HCT116 (cell line): ENCODE measurements at regions of chr1 and their contacts with region 1.

Region 1: GRCh38 chr1:149886396-149887195 is 12.8 kb upstream of the BOLA1 start:
- DNase-seq: peak; percentile 99
- ATAC-seq: peak; percentile 63
- H3K4me3 ChIP-seq: peak overlapping the region; percentile 50 to 63
- H3K27ac ChIP-seq: peak overlapping the region; percentile 100
- H3K4me1 ChIP-seq: peaks cover 22 to 45% of the 10 kb centered on the region in 2 experiments
- H3K27me3 ChIP-seq: no peaks in the 10 kb centered on the region
- CTCF ChIP-seq: no peak
- POLR2A ChIP-seq: peak; percentile 96
- RAD21 ChIP-seq: 0 out of 2 replicates have a peak, but pooled peaks have one; percentile 13

Region 2: GRCh38 chr1:149849947-149850360 is 36.6 kb before region 1 on chr1:
- CTCF ChIA-PET with region 1: no interaction called
- POLR2A ChIA-PET with region 1: interaction called, 37 read pairs
- RAD21 ChIA-PET with region 1: no interaction called
- intact Hi-C with region 1: no loop called
- DNase-seq: no peak
- ATAC-seq: no peak
- H3K4me3 ChIP-seq: peak overlapping the region; percentile 65
- H3K27ac ChIP-seq: peak overlapping the region; percentile 86
- H3K4me1 ChIP-seq: peaks cover 30 to 41% of the 10 kb centered on the region in 2 experiments
- H3K27me3 ChIP-seq: no peaks in the 10 kb centered on the region
- CTCF ChIP-seq: no peak
- POLR2A ChIP-seq: peak; percentile 36
- RAD21 ChIP-seq: no peak

Region 3: DNA sequence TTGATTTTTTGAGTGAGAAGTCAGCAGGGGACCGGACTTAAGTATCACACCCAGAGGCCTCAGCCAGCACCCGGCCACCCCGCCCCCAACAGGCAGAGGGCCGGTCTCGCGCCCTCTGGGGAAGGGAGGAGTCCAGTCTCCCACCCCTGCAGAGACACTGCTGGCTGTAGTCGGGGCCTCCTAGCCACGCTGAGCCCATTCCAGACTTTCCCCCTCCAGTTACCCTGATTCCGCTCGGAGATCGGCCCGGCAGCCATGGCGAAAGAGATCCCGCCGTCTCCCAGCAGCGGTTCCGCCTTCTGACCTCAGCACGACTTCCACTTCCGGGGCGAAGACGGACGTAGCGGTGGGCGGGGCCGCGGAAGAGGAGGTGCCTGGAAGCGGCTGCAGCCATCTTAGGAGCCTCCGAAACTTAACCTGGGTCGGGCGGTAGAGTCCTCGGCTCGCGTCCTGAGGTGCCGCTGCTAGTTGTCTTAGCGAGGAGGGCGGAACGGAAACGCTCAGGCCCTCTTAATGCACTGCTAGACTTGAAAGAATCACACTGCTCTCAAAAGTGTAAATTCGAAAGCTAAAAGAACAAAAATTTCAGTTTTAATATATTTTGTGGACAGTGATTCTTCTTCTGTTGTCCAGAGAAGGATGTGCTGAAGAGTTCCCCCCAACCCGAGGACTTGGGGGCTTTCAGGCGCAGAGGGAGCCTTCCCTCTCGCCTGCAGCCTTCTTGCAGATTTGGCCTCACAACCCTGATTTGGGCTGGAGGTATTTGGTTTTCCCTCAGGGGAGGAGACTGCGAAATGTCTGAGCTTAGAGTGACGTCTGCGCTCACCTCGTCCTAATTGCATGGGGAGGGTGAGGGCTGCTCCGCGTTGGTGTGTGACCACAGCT is 41.1 kb after region 1 on chr1 and contains the start of gene SF3B4:
- CTCF ChIA-PET with region 1: no interaction called
- POLR2A ChIA-PET with region 1: interaction called, 29 read pairs
- RAD21 ChIA-PET with region 1: no interaction called
- intact Hi-C with region 1: loop called (anchors 1 kb)
- DNase-seq: peak; percentile 79
- ATAC-seq: peak; percentile 94
- H3K4me3 ChIP-seq: peak within 1 kb of the TSS; percentile 89 to 99
- H3K27ac ChIP-seq: peak within 1 kb of the TSS; percentile 89
- H3K4me1 ChIP-seq: peaks cover 9 to 31% of the 10 kb centered on the region in 2 experiments; a peak in 3 of 4 replicates
- H3K27me3 ChIP-seq: no peaks in the 10 kb centered on the region
- CTCF ChIP-seq: no peak
- POLR2A ChIP-seq: peak; percentile 96
- RAD21 ChIP-seq: 0 out of 2 replicates have a peak, but pooled peaks have one; percentile 6
- total RNA-seq, gene SF3B4: 88.5 TPM

Region 4: GRCh38 chr1:150010393-150011115 is 124.0 kb after region 1 on chr1 and contains the start of gene OTUD7B:
- CTCF ChIA-PET with region 1: no interaction called
- POLR2A ChIA-PET with region 1: interaction called, 12 read pairs
- RAD21 ChIA-PET with region 1: no interaction called
- intact Hi-C with region 1: no loop called
- DNase-seq: peak; percentile 68
- ATAC-seq: peak; percentile 88
- H3K4me3 ChIP-seq: peak within 1 kb of the TSS; percentile 83 to 94
- H3K27ac ChIP-seq: peak within 1 kb of the TSS; percentile 85
- H3K4me1 ChIP-seq: peaks cover 7 to 38% of the 10 kb centered on the region in 2 experiments; a peak in 3 of 4 replicates
- H3K27me3 ChIP-seq: no peaks in the 10 kb centered on the region
- CTCF ChIP-seq: no peak
- POLR2A ChIP-seq: no peak
- RAD21 ChIP-seq: peak; percentile 19
- total RNA-seq, gene OTUD7B: 23.7 TPM

Region 5: DNA sequence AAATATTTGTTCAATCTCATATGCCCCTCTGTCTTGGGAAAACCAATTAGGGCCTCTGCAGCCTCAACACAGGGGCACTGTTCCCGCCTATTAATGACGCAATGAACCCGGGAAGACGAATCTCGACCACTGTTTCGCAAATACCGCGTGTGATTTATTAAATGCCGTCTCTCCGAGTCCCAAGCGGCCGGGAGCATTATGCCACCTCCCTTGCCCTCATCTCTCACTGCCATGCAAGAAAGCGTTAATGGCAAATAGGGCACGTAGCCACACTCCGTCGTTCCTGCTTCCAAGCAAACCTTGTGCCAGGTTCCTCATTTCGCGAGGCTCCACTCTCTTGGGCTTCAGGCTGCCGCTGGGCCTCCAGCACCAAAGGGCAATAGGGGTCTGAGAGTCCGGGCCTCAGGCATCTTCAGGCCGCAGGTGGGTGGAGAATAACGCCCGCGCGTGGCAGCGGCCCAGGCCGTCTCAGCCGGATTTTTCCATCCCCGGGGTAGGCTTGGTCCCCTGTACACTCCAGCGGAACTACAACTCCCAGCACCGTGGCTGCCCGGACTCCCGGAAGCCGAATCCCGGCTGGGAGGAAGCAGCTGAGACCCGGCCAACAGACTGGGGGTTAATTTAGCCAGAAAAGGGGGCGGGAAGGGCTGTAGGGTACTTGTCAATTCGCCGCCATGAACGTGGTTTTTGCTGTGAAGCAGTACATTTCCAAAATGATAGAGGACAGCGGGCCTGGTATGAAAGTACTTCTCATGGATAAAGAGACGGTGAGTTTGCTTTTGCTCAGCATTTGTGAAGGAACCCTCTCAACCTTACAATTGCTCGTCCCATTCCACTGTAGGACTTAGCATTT is 180.8 kb after region 1 on chr1 and contains the start of gene VPS45:
- CTCF ChIA-PET with region 1: no interaction called
- POLR2A ChIA-PET with region 1: interaction called, 19 read pairs
- RAD21 ChIA-PET with region 1: no interaction called
- intact Hi-C with region 1: no loop called
- DNase-seq: peak; percentile 89
- ATAC-seq: peak; percentile 93
- H3K4me3 ChIP-seq: peak within 1 kb of the TSS; percentile 78 to 83
- H3K27ac ChIP-seq: peak within 1 kb of the TSS; percentile 94
- H3K4me1 ChIP-seq: peaks cover 15 to 32% of the 10 kb centered on the region in 2 experiments
- H3K27me3 ChIP-seq: no peaks in the 10 kb centered on the region
- CTCF ChIP-seq: no peak
- POLR2A ChIP-seq: no peak
- RAD21 ChIP-seq: no peak
- total RNA-seq, gene VPS45: 28.1 TPM

Region 6: DNA sequence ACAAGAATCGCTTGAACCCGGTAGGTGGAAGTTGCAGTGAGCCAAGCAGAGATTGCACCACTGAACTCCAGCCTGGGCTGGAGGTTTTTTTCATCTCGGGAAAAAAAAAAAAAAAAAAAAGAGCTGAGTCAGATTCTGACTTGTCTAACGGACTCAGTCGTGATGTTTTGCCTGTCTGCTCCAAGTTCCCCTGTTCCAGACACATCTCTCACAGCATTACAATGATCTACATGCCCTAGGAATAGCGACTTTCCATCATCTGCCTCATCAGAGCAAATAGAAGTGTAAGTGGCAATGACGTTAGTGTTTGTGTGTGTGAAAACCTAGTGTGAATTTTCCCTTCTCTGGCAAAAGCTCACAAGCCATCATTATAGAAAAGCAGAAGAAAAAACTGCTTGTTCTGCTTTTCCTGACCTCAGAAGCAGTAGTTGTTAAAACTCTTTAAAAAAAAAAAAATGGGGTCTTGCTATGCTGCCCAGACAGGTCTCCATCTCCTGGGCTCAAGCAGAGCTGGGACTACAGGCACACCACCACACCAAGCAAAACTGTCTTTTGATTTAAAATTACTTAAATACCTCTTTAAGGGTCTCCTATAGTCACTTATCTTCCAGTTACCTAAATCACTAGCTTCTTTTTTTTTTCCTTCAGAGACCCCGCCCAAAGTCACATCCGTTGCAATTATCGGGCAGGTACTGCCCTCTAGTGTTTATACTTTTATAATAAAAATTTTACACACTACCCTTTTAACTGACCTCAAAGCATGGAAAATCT is 300.4 kb after region 1 on chr1:
- CTCF ChIA-PET with region 1: interaction called, 16 read pairs
- POLR2A ChIA-PET with region 1: interaction called, 46 read pairs
- RAD21 ChIA-PET with region 1: interaction called in 1 of 2 experiments, 4 read pairs
- intact Hi-C with region 1: loop called (anchors 1 kb)
- DNase-seq: peak; percentile 38
- ATAC-seq: peak; percentile 74
- H3K4me3 ChIP-seq: peak overlapping the region; percentile 22 to 44
- H3K27ac ChIP-seq: peak overlapping the region; percentile 61
- H3K4me1 ChIP-seq: peaks cover 14 to 25% of the 10 kb centered on the region in 2 experiments
- H3K27me3 ChIP-seq: no peaks in the 10 kb centered on the region
- CTCF ChIP-seq: peak; percentile 39 to 63 (median 56); a peak in 4 of 6 replicates
- POLR2A ChIP-seq: no peak
- RAD21 ChIP-seq: peak; percentile 83